ENCODE measurements at regions of chr14 and their contacts with region 1.

Region 1: DNA sequence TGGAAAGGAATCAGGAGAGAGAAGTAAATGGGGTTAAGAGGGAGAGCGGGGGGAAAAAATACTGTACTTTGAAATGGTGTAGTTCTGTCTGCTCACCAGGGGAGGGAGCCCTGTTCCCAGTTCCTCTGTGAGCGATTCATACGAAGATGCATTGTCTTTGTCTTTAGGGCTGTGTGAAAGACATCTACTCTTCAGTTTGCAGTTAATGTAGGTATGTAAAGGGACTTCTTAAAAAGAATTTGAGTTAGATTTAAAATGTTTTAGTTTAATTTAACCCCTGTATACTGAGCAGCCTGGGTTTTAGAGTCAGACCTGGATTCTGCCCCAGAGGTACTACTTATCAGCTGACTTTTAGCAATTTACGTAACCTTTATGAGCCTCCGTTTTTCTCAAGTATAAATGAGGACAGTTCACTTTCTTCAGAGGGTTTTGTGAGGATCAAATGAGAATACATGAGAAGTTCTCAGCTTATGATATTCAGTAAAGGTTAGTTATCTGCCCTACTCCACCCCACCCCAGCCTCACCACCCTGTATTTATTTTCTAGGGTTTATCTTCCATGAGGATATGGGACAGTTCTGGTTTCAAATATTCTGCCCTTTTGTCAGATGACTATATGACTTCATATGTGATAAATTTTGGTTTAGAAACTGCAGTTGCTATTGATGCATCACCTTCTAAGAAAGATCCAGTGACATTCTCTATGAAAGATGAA is 82.5 kb upstream of the EVL start:
- DNase-seq: peak in 6 of 7 donors; percentile 42 to 77 (median 60)
- H3K4me3 ChIP-seq: no peak overlapping the region
- H3K27ac ChIP-seq: no peak overlapping the region
- H3K4me1 ChIP-seq: peaks cover 9 to 19% of the 10 kb centered on the region in 2 donors
- H3K27me3 ChIP-seq: no peaks in the 10 kb centered on the region
- CTCF ChIP-seq: peak; percentile 79 to 98 (median 90)
- POLR2A ChIP-seq: no peak

Region 2: GRCh38 chr14:100108042-100108825 is 125.5 kb after region 1 on chr14:
- intact Hi-C with region 1: loop called (anchors 5 kb)
- DNase-seq: peak; percentile 69 to 91 (median 81)
- H3K4me3 ChIP-seq: no peak overlapping the region
- H3K27ac ChIP-seq: peak overlapping the region in 1 of 5 donors; percentile 1
- H3K4me1 ChIP-seq: peaks cover 13 to 30% of the 10 kb centered on the region in 2 donors
- H3K27me3 ChIP-seq: no peaks in the 10 kb centered on the region
- CTCF ChIP-seq: peak; percentile 81 to 92 (median 88)
- POLR2A ChIP-seq: no peak

Region 3: GRCh38 chr14:100192672-100193416 is 210.2 kb after region 1 on chr14:
- intact Hi-C with region 1: loop called (anchors 5 to 10 kb)
- DNase-seq: peak; percentile 99 to 100 (median 100)
- H3K4me3 ChIP-seq: peak overlapping the region in 2 of 4 donors; percentile 23 to 53
- H3K27ac ChIP-seq: peak overlapping the region; percentile 57 to 93 (median 82)
- H3K4me1 ChIP-seq: peaks cover 7 to 12% of the 10 kb centered on the region in 2 donors
- H3K27me3 ChIP-seq: no peaks in the 10 kb centered on the region
- CTCF ChIP-seq: peak; percentile 84 to 96 (median 90)
- POLR2A ChIP-seq: peak; percentile 45 to 62